Mammary epithelial cell (primary cell): ENCODE measurements at regions of chr3 and their contacts with region 1.

Region 1: DNA sequence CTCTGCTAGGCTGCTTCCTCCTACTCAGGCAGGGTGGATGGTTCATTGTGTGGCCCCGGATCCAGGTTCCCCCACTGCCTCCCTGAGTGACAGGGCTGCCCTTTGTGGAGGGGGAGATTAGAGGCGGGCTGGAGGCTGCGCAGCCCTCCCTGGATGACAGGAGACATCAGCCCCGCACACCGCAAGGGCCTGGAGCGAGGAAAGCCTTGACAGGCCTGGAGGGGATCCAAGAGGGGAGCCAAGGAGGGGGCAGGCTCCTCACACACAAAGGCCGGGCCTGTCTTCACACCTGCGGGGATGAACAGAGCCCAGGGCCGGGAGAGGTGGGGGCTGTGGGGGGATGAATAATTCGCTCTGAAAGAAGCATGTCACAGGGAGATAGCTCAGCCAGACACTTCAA is 72.9 kb downstream of the RPN1 start:
- DNase-seq: no peak
- H3K4me3 ChIP-seq: no peak overlapping the region
- H3K27ac ChIP-seq: no peak overlapping the region
- H3K4me1 ChIP-seq: no peaks in the 10 kb centered on the region
- H3K27me3 ChIP-seq: peaks cover 8% of the 10 kb centered on the region
- CTCF ChIP-seq: no peak

Region 2: GRCh38 chr3:128497387-128498126 is 80.2 kb before region 1 on chr3:
- CTCF ChIA-PET with region 1: no interaction called
- dilution Hi-C with region 1: no loop called
- in situ Hi-C with region 1: no loop called
- intact Hi-C with region 1: no loop called
- DNase-seq: no peak
- H3K4me3 ChIP-seq: peak overlapping the region; percentile 20 to 60 (median 50)
- H3K27ac ChIP-seq: no peak overlapping the region
- H3K4me1 ChIP-seq: peaks cover 6% of the 10 kb centered on the region
- H3K27me3 ChIP-seq: peaks cover 21% of the 10 kb centered on the region
- CTCF ChIP-seq: peak; percentile 40 to 63

Region 3: GRCh38 chr3:128537121-128537703 is 40.5 kb before region 1 on chr3:
- CTCF ChIA-PET with region 1: no interaction called
- dilution Hi-C with region 1: loop called (anchors 5 kb)
- in situ Hi-C with region 1: no loop called
- intact Hi-C with region 1: no loop called
- DNase-seq: no peak
- H3K4me3 ChIP-seq: no peak overlapping the region
- H3K27ac ChIP-seq: no peak overlapping the region
- H3K4me1 ChIP-seq: no peaks in the 10 kb centered on the region
- H3K27me3 ChIP-seq: no peaks in the 10 kb centered on the region
- CTCF ChIP-seq: no peak

Region 4: DNA sequence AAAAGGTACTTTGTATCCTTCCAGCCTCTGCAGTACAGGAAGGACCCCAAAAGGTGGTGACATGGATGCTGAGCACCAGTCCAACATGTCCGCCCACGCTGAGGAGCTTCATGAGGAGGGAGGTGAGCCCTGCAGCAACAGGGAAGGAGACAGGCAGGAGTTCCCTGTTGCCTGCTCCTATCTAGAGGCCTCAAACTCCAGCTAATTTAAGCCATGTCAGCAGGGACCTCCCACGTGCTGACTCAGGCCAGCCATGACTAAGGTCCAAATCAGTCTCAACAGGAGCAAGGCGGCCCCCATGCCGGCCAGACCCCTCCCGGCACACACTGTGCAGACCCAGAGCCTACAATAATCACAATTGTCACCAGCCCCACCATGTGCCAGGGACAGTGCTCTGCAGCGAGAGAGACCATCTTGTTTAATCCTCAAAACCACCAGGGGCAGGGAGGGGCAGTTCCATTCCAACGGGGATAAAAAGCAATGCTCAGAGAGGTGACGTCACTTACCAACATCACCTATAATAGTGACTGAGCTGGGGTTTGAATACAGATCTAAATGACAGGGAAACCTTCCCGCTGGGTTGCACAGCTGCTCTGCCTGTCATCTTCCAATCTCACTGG is 30.2 kb before region 1 on chr3:
- CTCF ChIA-PET with region 1: no interaction called
- dilution Hi-C with region 1: no loop called
- in situ Hi-C with region 1: no loop called
- intact Hi-C with region 1: no loop called
- DNase-seq: peak; percentile 55
- H3K4me3 ChIP-seq: no peak overlapping the region
- H3K27ac ChIP-seq: no peak overlapping the region
- H3K4me1 ChIP-seq: peaks cover 14% of the 10 kb centered on the region
- H3K27me3 ChIP-seq: no peaks in the 10 kb centered on the region
- CTCF ChIP-seq: no peak

Region 5: GRCh38 chr3:128557531-128558280 is 20.0 kb before region 1 on chr3:
- CTCF ChIA-PET with region 1: no interaction called
- dilution Hi-C with region 1: no loop called
- in situ Hi-C with region 1: no loop called
- intact Hi-C with region 1: loop called (anchors 1 kb)
- DNase-seq: no peak
- H3K4me3 ChIP-seq: no peak overlapping the region
- H3K27ac ChIP-seq: no peak overlapping the region
- H3K4me1 ChIP-seq: no peaks in the 10 kb centered on the region
- H3K27me3 ChIP-seq: peaks cover 5% of the 10 kb centered on the region
- CTCF ChIP-seq: no peak

Region 6: DNA sequence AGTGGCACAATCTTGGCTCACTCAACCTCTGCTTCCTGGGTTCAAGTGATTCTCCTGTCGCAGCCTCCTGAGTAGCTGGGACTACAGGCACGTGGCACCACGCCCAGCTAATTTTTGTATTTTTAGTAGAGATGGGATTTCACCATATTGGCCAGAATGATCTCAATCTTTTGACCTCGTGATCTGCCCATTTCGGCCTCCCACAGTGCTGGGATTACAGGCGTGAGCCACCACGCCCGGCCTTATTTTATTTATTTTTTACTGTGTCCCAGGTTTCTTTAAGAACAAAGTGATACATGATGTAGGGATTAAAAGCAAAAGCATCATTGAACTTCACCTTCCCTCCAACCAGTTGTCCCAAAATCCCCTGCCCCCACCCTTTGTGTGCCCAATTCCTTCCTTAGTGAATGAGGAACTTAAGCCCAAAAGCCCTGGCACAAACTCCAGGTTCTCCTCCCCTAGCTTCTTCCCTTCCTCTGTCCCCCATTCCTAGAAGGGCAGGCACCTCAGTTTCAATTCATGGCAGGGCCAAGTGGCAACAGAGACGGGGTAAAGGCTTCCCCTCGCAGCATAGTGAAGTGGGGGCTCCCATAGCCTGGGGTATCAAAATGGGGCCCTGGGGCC is 96.6 kb after region 1 on chr3:
- CTCF ChIA-PET with region 1: no interaction called
- dilution Hi-C with region 1: no loop called
- in situ Hi-C with region 1: no loop called
- intact Hi-C with region 1: no loop called
- DNase-seq: no peak
- H3K4me3 ChIP-seq: no peak overlapping the region
- H3K27ac ChIP-seq: no peak overlapping the region
- H3K4me1 ChIP-seq: no peaks in the 10 kb centered on the region
- H3K27me3 ChIP-seq: no peaks in the 10 kb centered on the region
- CTCF ChIP-seq: no peak